ENCODE measurements at regions of chr7 and their contacts with region 1.

Region 1: DNA sequence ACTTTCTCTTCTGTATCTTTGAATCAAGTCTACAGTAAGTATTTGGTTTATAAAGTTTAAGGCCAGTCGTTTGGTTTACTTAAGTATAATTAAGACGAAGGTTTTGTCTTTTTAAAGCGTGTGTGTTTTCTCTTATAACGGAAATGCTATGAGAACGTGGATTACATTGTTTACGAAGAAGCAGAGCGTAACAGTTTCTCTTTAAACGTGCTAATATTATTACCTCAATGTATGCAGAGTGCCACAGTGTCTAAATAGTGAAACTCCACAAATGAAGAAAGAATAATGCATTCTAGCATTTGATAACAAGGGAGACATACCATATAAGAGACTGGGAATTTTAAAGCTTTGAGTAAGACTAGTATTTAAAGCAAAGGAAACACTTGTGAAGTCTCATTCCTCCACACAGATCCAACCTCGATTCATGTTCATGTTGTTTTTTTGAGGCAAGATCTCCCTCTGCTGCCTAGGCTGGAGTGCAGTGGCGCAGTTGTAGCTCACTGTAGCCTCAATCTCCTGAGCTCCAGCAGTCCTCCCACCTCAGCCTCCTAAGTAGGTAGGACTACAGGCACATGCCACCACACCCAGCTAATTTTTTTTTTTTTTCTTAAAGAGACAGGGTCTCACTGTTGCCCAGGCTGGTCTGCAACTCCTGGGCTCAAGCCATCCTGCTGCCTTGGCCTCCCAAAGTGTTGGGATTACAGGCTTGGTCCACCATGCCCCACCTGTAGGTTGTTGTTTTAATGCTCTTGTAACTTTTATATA is 75.1 kb downstream of the ANKRD61 start:
- DNase-seq: no peak
- ATAC-seq: peak; percentile 59
- H3K4me3 ChIP-seq: peak overlapping the region; percentile 93
- H3K27ac ChIP-seq: peak overlapping the region; percentile 66
- H3K4me1 ChIP-seq: 0 out of 2 replicates have a peak, but pooled peaks cover 3% of the 10 kb centered on the region
- H3K27me3 ChIP-seq: no peaks in the 10 kb centered on the region
- CTCF ChIP-seq: peak; percentile 21 to 51 (median 31); a peak in 4 of 6 replicates
- EP300 ChIP-seq: no peak
- POLR2A ChIP-seq: no peak
- RAD21 ChIP-seq: peak; percentile 32; the same call in 1 of the 2 replicates

Region 2: GRCh38 chr7:4919969-4920766 is 1186.2 kb before region 1 on chr7:
- CTCF ChIA-PET with region 1: no interaction called
- POLR2A ChIA-PET with region 1: no interaction called
- RAD21 ChIA-PET with region 1: no interaction called
- SMC1A ChIA-PET with region 1: no interaction called
- in situ Hi-C with region 1: no loop called
- intact Hi-C with region 1: no loop called
- DNase-seq: no peak
- ATAC-seq: no peak
- H3K4me3 ChIP-seq: no peak overlapping the region
- H3K27ac ChIP-seq: no peak overlapping the region
- H3K4me1 ChIP-seq: no peaks in the 10 kb centered on the region
- H3K27me3 ChIP-seq: no peaks in the 10 kb centered on the region
- CTCF ChIP-seq: no peak
- EP300 ChIP-seq: no peak
- POLR2A ChIP-seq: no peak
- RAD21 ChIP-seq: no peak

Region 3: GRCh38 chr7:5997222-5997808 is 109.0 kb before region 1 on chr7:
- CTCF ChIA-PET with region 1: interaction called, 26 read pairs
- POLR2A ChIA-PET with region 1: interaction called, 9 read pairs
- RAD21 ChIA-PET with region 1: interaction called, 12 read pairs
- SMC1A ChIA-PET with region 1: interaction called, 14 read pairs
- in situ Hi-C with region 1: no loop called
- intact Hi-C with region 1: loop called (anchors 2 kb)
- DNase-seq: no peak
- ATAC-seq: peak; percentile 71
- H3K4me3 ChIP-seq: no peak overlapping the region
- H3K27ac ChIP-seq: no peak overlapping the region
- H3K4me1 ChIP-seq: no peaks in the 10 kb centered on the region
- H3K27me3 ChIP-seq: no peaks in the 10 kb centered on the region
- CTCF ChIP-seq: peak; percentile 52 to 61 (median 56)
- EP300 ChIP-seq: no peak
- POLR2A ChIP-seq: no peak
- RAD21 ChIP-seq: peak; percentile 76

Region 4: DNA sequence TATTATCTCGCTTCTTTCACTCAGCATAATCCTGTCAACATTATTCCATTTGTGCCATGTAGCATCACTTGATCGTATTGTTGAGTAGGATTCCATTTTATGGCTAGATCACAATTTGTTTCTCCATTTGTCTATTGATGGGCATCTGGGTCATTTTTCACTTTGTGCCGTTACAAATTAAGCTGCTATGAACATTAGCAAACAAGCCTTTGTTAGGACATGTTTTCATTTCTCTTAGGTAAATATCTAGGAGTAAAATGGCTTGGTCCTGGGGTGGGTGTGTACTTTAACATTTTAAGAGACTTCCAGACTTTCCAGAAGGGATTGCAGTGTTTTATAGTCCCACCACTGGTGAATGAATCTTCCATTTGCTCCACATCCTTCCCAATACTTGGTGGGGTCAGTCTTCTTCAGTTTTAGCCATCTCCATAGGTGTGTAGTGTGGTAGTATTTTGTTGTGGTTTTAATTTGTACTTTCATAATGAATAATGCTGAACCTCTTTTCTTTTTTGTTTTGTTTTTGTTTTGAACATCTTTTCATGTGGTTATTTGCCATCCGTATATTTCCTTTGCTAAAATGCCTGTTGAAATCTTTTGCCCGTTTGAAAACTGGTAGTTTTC is 11.1 kb after region 1 on chr7:
- CTCF ChIA-PET with region 1: interaction called, 13 read pairs
- POLR2A ChIA-PET with region 1: no interaction called
- RAD21 ChIA-PET with region 1: no interaction called
- SMC1A ChIA-PET with region 1: interaction called, 8 read pairs
- in situ Hi-C with region 1: no loop called
- intact Hi-C with region 1: loop called (anchors 1 kb)
- DNase-seq: no peak
- ATAC-seq: peak; percentile 52
- H3K4me3 ChIP-seq: no peak overlapping the region
- H3K27ac ChIP-seq: no peak overlapping the region
- H3K4me1 ChIP-seq: peaks cover 3% of the 10 kb centered on the region; the same call in 1 of the 2 replicates
- H3K27me3 ChIP-seq: no peaks in the 10 kb centered on the region
- CTCF ChIP-seq: no peak
- EP300 ChIP-seq: no peak
- POLR2A ChIP-seq: no peak
- RAD21 ChIP-seq: no peak

Region 5: GRCh38 chr7:6256677-6257535 is 150.6 kb after region 1 on chr7:
- CTCF ChIA-PET with region 1: interaction called, 3 read pairs
- POLR2A ChIA-PET with region 1: no interaction called
- RAD21 ChIA-PET with region 1: interaction called, 19 read pairs
- SMC1A ChIA-PET with region 1: interaction called, 5 read pairs
- in situ Hi-C with region 1: no loop called
- intact Hi-C with region 1: no loop called
- DNase-seq: peak; percentile 89
- ATAC-seq: peak; percentile 84
- H3K4me3 ChIP-seq: peak overlapping the region; percentile 37; the same call in 1 of the 2 replicates
- H3K27ac ChIP-seq: peak overlapping the region; percentile 92
- H3K4me1 ChIP-seq: peaks cover 17% of the 10 kb centered on the region
- H3K27me3 ChIP-seq: no peaks in the 10 kb centered on the region
- CTCF ChIP-seq: 0 out of 6 replicates have a peak, but pooled peaks of 1 of the 3 experiments have one; percentile 7
- EP300 ChIP-seq: peak; percentile 58 to 76; a peak in 3 of 4 replicates
- POLR2A ChIP-seq: peak; percentile 47
- RAD21 ChIP-seq: peak; percentile 42; the same call in 1 of the 2 replicates

Region 6: GRCh38 chr7:6323967-6324701 is 217.8 kb after region 1 on chr7:
- CTCF ChIA-PET with region 1: interaction called, 36 read pairs
- POLR2A ChIA-PET with region 1: no interaction called
- RAD21 ChIA-PET with region 1: interaction called, 22 read pairs
- SMC1A ChIA-PET with region 1: interaction called, 21 read pairs
- in situ Hi-C with region 1: no loop called
- intact Hi-C with region 1: no loop called
- DNase-seq: no peak
- ATAC-seq: no peak
- H3K4me3 ChIP-seq: no peak overlapping the region
- H3K27ac ChIP-seq: no peak overlapping the region
- H3K4me1 ChIP-seq: no peaks in the 10 kb centered on the region
- H3K27me3 ChIP-seq: no peaks in the 10 kb centered on the region
- CTCF ChIP-seq: no peak
- EP300 ChIP-seq: no peak
- POLR2A ChIP-seq: no peak
- RAD21 ChIP-seq: no peak